A549 (cell line): ENCODE measurements at regions of chr19 and their contacts with region 1.

Region 1: GRCh38 chr19:33302175-33302973 is at the start of gene CEBPA:
- DNase-seq: peak; percentile 93 to 95
- ATAC-seq: peak; percentile 83 to 92
- H3K4me3 ChIP-seq: peak within 1 kb of the TSS; percentile 63
- H3K27ac ChIP-seq: peak within 1 kb of the TSS; percentile 86 to 93
- H3K4me1 ChIP-seq: peaks cover 11% of the 10 kb centered on the region
- CTCF ChIP-seq: peak; percentile 99
- EP300 ChIP-seq: no peak
- POLR2A ChIP-seq: peak; percentile 100
- RAD21 ChIP-seq: no peak; a peak in 3 of 5 replicates
- polyA plus RNA-seq, gene CEBPA: 3.5 and 4.3 TPM in 2 replicates

Region 2: GRCh38 chr19:33176670-33177416 is 125.5 kb before region 1 on chr19:
- CTCF ChIA-PET with region 1: interaction called, 7 read pairs
- POLR2A ChIA-PET with region 1: interaction called, 15 read pairs
- DNase-seq: peak; percentile 100
- ATAC-seq: peak; percentile 84 to 94
- H3K4me3 ChIP-seq: peak overlapping the region; percentile 65
- H3K27ac ChIP-seq: peak overlapping the region; percentile 89 to 91
- H3K4me1 ChIP-seq: peaks cover 19% of the 10 kb centered on the region
- CTCF ChIP-seq: no peak
- EP300 ChIP-seq: no peak
- POLR2A ChIP-seq: peak; percentile 100
- RAD21 ChIP-seq: 0 out of 5 replicates have a peak, but pooled peaks of 1 of the 2 experiments have one; percentile 16

Region 3: DNA sequence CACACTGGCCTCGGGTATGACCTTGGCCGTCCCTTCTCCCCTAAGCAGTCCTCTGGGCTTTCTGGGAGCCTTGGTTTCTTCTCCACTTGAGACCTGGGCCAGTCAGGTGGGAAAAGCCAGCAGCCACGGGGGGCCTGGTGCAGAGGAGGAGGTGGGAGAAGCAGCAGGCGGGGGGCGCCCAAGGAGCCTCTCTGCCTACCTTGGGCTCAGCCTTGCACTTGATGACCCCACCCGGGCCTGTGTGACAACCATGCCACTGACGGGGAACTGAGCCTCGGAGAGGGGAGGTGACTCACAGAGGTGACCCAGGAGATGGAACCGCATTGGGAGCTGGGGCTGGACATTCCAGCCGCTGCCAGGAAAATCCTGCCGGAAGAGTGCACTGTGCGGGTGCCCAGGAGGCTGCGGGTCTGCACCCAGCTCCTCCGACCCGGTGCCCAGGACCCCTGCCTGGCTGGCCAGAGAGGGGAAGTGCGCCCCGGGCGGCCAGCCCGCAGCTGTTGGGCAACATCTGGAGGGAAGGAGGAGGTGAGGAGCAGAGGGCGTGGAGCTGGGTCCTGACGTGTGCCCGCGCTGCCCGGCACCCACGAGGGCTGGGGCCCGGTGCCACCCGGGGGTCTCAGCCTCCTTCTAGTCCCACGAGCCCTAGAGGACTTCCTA is 53.3 kb before region 1 on chr19:
- CTCF ChIA-PET with region 1: interaction called, 603 read pairs
- POLR2A ChIA-PET with region 1: interaction called, 13 read pairs
- DNase-seq: peak; percentile 63 to 90
- ATAC-seq: peak; percentile 72 to 79
- H3K4me3 ChIP-seq: 0 out of 3 replicates have a peak overlapping the region, but pooled peaks have one; percentile 18
- H3K27ac ChIP-seq: peak overlapping the region; percentile 36 to 75; a peak in 4 of 6 replicates
- H3K4me1 ChIP-seq: peaks cover 13% of the 10 kb centered on the region
- CTCF ChIP-seq: peak; percentile 48
- EP300 ChIP-seq: no peak
- POLR2A ChIP-seq: no peak
- RAD21 ChIP-seq: peak in 1 of 2 experiments; percentile 45; a peak in 3 of 5 replicates

Region 4: DNA sequence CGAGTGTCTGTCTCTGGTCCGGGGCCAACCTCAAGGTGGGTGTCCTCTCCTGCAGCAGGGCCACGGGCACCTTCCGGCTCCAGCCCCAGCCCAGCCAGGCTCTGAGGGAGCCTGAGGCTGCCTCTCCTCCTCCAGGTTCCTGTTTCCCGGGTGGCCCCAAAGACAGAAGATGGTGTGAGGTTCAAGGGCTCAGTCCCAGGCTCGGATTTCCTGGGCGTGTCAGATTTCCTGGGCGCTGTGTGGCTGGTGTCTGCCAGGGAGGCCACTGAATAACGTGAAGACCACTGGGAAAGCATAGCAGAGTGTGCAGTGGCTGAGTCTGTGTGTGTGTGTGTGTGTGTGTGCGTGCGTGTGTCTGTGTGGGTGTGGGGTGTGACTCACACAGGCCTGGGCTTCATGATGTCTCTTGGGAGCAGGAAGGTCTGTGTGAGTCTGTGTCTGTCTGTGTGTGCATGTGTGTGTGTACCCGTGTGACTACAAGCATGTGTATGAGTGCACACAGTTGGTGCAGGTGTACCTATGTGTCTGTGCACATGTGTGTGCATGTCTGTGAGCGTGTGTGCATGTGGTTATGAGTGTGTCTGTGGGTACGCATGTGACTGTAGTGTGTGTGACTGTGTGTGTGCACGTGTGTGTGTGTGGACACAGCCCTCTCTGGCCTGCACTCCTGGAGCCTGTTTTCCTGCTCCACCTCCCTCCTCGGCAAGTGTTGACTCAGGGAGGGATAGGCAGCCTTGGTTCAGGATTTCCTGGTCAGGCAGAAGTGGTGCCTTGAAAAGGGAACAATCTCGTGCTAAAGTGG is 28.3 kb before region 1 on chr19:
- CTCF ChIA-PET with region 1: interaction called, 33 read pairs
- POLR2A ChIA-PET with region 1: interaction called, 8 read pairs
- DNase-seq: peak in 1 of 2 experiments; percentile 80
- ATAC-seq: peak; percentile 42 to 66
- H3K4me3 ChIP-seq: no peak overlapping the region
- H3K27ac ChIP-seq: peak overlapping the region; percentile 43 to 76
- H3K4me1 ChIP-seq: peaks cover 29% of the 10 kb centered on the region
- CTCF ChIP-seq: no peak
- EP300 ChIP-seq: no peak
- POLR2A ChIP-seq: no peak
- RAD21 ChIP-seq: no peak

Region 5: DNA sequence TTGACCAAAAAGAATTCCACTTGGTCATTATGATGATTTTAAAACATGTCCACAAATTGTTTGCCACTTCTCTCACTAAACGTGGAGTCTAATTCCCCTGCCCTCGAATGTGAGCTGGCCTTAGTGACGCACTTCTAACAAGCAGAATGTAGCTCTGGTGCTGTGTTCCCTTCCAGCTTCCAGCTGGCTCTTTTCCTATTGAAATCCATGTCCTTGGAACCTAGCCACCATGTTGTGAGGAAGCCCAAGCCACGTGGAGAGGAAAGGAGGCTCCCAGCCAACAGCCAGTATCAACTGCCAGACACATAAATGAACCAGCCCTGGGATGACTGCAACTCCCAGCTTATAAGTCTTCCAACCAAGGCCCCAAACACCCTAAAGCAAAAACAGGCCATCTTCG is 23.5 kb after region 1 on chr19:
- CTCF ChIA-PET with region 1: interaction called, 17 read pairs
- POLR2A ChIA-PET with region 1: interaction called, 4 read pairs
- DNase-seq: no peak
- ATAC-seq: 0 out of 6 replicates have a peak, but pooled peaks of 1 of the 2 experiments have one; percentile 20
- H3K4me3 ChIP-seq: no peak overlapping the region
- H3K27ac ChIP-seq: no peak overlapping the region
- H3K4me1 ChIP-seq: peaks cover 2% of the 10 kb centered on the region; the same call in 1 of the 3 replicates
- CTCF ChIP-seq: no peak
- EP300 ChIP-seq: no peak
- POLR2A ChIP-seq: no peak
- RAD21 ChIP-seq: no peak

Region 6: DNA sequence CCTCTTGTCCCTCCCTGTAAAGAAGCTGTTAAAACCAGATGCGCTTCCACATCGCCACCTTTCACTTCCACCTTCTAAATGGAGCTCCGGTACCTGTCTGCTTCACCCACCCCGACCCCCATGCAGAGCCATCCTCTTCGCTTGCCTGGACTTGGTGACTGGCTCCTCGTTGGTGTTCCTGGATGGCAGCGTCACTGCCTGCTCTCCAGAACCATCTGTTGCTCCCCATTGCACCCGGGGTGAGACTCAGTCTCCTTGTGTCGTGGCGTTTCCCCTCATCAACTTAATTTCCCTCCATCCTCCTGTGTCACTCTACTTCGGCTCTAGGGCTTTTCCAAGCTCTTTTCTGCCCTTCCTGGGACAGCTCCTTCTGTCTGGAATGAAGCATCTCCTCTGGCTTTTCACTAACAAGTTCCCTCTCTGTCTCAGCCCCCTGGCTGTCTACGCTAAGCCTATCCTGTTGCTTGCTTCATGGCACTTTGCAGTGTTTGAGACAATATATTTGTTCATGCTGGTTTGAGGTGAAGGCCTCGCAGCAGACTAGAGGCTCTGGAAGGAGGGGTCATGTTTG is 81.4 kb after region 1 on chr19:
- CTCF ChIA-PET with region 1: interaction called, 36 read pairs
- POLR2A ChIA-PET with region 1: interaction called, 51 read pairs
- DNase-seq: no peak
- ATAC-seq: no peak
- H3K4me3 ChIP-seq: no peak overlapping the region
- H3K27ac ChIP-seq: no peak overlapping the region
- H3K4me1 ChIP-seq: no peaks in the 10 kb centered on the region; the same call in 2 of the 3 replicates
- CTCF ChIP-seq: no peak
- EP300 ChIP-seq: no peak
- POLR2A ChIP-seq: no peak
- RAD21 ChIP-seq: no peak

Region 7: DNA sequence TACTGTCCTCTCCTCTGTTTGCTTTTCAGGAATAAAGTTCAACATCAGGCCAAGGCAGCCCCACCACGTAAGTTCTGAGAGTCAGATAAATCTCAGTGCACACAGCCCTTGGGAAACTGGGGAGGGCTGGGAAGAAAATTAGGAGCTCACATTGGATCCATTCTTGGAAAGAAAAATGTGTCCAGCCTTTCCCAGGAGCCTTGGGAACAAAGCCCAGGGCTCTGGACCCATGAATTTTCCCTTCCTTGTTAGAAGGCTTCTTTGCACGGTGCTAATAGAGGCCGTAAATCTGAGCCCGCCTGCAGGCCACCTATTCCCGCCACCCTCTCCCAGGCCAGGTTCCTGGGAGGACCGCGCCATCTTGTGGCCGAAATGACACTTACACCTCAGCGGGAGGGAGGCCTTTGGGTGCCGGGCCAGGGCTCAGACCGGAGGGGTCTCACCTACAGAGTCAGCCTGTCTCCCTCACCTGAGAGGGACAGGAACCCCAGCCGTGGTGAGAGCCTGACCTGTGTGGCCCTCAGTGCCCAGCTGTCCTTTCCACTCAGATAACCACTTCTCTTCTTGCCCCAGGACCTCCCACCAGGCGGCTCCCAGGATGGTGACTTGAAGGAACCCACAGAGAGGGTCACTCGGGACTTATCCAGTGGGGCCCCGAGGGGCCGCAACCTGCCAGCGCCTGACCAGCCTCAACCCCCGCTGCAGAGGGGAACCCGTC is 469.2 kb after region 1 on chr19:
- CTCF ChIA-PET with region 1: interaction called, 12 read pairs
- POLR2A ChIA-PET with region 1: no interaction called
- DNase-seq: peak; percentile 80 to 94
- ATAC-seq: peak; percentile 54 to 91
- H3K4me3 ChIP-seq: no peak overlapping the region
- H3K27ac ChIP-seq: no peak overlapping the region
- H3K4me1 ChIP-seq: no peaks in the 10 kb centered on the region
- CTCF ChIP-seq: peak; percentile 98
- EP300 ChIP-seq: no peak
- POLR2A ChIP-seq: no peak
- RAD21 ChIP-seq: peak; percentile 99 to 100